ENCODE measurements at regions of chr10 and their contacts with region 1.

Region 1: GRCh38 chr10:79562135-79562756 is 2.0 kb upstream of the SFTPA2 start:
- DNase-seq: peak; percentile 74
- H3K4me3 ChIP-seq: no peak overlapping the region
- H3K27ac ChIP-seq: no peak overlapping the region
- H3K4me1 ChIP-seq: no peaks in the 10 kb centered on the region
- H3K27me3 ChIP-seq: peaks cover 38% of the 10 kb centered on the region

Region 2: GRCh38 chr10:79929409-79929904 is 367.2 kb after region 1 on chr10:
- in situ Hi-C with region 1: loop called (anchors 10 kb)
- DNase-seq: peak; percentile 83
- H3K4me3 ChIP-seq: no peak overlapping the region
- H3K27ac ChIP-seq: no peak overlapping the region
- H3K4me1 ChIP-seq: no peaks in the 10 kb centered on the region
- H3K27me3 ChIP-seq: peaks cover 12% of the 10 kb centered on the region

Region 3: GRCh38 chr10:80260295-80261243 is 698.3 kb after region 1 on chr10:
- in situ Hi-C with region 1: loop called (anchors 25 kb)
- DNase-seq: peak; percentile 23
- H3K4me3 ChIP-seq: no peak overlapping the region
- H3K27ac ChIP-seq: no peak overlapping the region
- H3K4me1 ChIP-seq: no peaks in the 10 kb centered on the region
- H3K27me3 ChIP-seq: peaks cover 8% of the 10 kb centered on the region; the same call in 1 of the 2 replicates

Measured in GM23248 (cell line).